SK-N-SH (cell line): ENCODE measurements at regions of chr3 and their contacts with region 1.

Region 1: GRCh38 chr3:45210308-45211041 is 15.6 kb downstream of the TMEM158 start:
- DNase-seq: peak; percentile 75
- H3K4me3 ChIP-seq: no peak overlapping the region; a peak in 1 of 4 replicates
- H3K27ac ChIP-seq: no peak overlapping the region
- H3K4me1 ChIP-seq: peaks cover 0 to 9% of the 10 kb centered on the region in 2 experiments; a peak in 1 of 4 replicates
- H3K27me3 ChIP-seq: no peaks in the 10 kb centered on the region
- CTCF ChIP-seq: peak; percentile 89
- EP300 ChIP-seq: no peak; a peak in 1 of 4 replicates
- RAD21 ChIP-seq: peak; percentile 81

Region 2: GRCh38 chr3:45055411-45056143 is 154.9 kb before region 1 on chr3:
- CTCF ChIA-PET with region 1: interaction called, 21 read pairs
- POLR2A ChIA-PET with region 1: no interaction called
- DNase-seq: peak; percentile 59
- H3K4me3 ChIP-seq: no peak overlapping the region
- H3K27ac ChIP-seq: peak overlapping the region in 1 of 2 experiments; percentile 67; a peak in 2 of 4 replicates
- H3K4me1 ChIP-seq: peaks cover 0 to 17% of the 10 kb centered on the region in 2 experiments; a peak in 2 of 4 replicates
- H3K27me3 ChIP-seq: no peaks in the 10 kb centered on the region
- CTCF ChIP-seq: peak; percentile 53
- EP300 ChIP-seq: no peak
- RAD21 ChIP-seq: peak; percentile 55

Region 3: GRCh38 chr3:45182915-45183867 is 27.3 kb before region 1 on chr3:
- CTCF ChIA-PET with region 1: interaction called, 11 read pairs
- POLR2A ChIA-PET with region 1: no interaction called
- DNase-seq: no peak
- H3K4me3 ChIP-seq: no peak overlapping the region
- H3K27ac ChIP-seq: peak overlapping the region in 1 of 2 experiments; percentile 19; a peak in 1 of 4 replicates
- H3K4me1 ChIP-seq: peaks cover 7 to 12% of the 10 kb centered on the region in 2 experiments; a peak in 2 of 4 replicates
- H3K27me3 ChIP-seq: no peaks in the 10 kb centered on the region
- CTCF ChIP-seq: no peak
- EP300 ChIP-seq: no peak
- RAD21 ChIP-seq: no peak

Region 4: DNA sequence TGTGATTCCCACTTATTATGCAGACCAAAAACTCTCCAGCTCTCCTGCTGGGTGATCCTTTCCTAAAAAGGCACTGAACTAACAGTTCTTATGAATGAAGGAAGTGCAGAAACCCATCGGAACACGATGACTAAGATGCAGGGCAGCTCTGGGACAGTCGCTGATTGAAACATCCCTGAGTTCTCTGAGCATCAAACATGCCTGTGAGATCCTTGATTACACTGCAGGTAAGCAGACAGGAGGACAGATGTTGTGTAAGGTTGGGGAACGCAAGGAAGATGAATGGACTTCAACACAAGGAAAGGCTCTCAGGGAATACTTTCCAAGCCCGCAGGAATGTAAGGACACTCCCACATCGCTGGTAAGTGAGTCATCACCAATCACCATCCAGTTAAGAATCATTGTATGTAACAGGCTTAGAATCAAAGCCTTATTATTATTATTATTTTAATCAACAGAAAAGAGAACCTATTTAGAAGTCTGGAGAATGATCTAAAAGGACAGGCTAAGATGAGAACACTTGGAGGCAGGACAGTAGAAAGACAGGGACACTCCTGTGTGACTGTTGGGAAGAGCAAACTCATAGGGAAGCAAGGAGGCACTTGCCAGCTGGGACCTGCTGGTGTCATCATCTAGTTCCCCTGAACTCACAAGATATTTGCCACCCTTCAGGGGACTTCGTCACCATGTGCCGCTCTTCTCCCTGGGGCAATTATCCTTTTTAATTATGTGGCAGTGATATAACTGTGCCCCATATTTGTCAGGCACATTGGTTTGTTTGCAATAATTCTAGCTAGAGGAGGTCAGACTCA is 10.4 kb before region 1 on chr3:
- CTCF ChIA-PET with region 1: interaction called, 19 read pairs
- POLR2A ChIA-PET with region 1: no interaction called
- DNase-seq: no peak
- H3K4me3 ChIP-seq: 0 out of 4 replicates have a peak overlapping the region, but pooled peaks of 1 of the 2 experiments have one; percentile 29
- H3K27ac ChIP-seq: peak overlapping the region; percentile 3 to 81; a peak in 3 of 4 replicates
- H3K4me1 ChIP-seq: peaks cover 0 to 20% of the 10 kb centered on the region in 2 experiments; a peak in 3 of 4 replicates
- H3K27me3 ChIP-seq: no peaks in the 10 kb centered on the region
- CTCF ChIP-seq: no peak
- EP300 ChIP-seq: peak in 1 of 2 experiments; percentile 28; a peak in 1 of 4 replicates
- RAD21 ChIP-seq: no peak

Region 5: GRCh38 chr3:45244356-45244755 is 33.9 kb after region 1 on chr3:
- CTCF ChIA-PET with region 1: no interaction called
- POLR2A ChIA-PET with region 1: no interaction called
- DNase-seq: no peak
- H3K4me3 ChIP-seq: no peak overlapping the region
- H3K27ac ChIP-seq: no peak overlapping the region
- H3K4me1 ChIP-seq: no peaks in the 10 kb centered on the region; a peak in 1 of 4 replicates
- H3K27me3 ChIP-seq: no peaks in the 10 kb centered on the region
- CTCF ChIP-seq: no peak
- EP300 ChIP-seq: no peak
- RAD21 ChIP-seq: no peak

Region 6: DNA sequence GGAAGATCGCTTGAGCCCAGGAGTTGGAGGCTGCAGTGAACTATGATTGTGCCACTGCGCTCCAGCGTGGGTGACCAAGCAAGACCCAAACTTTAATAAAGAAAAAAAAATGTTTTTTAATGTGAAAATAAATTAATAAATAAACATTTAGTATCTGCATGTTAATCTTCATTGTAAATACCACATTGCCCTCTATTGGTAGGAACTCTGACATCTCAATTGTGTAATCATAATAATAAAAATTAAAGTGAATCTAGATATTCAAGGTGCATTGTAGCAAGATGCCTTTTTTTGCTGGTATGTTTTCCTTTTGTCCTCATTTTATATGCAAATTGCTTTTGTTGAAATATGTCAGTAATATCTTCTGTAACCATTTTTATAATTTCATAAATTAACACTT is 289.1 kb after region 1 on chr3:
- CTCF ChIA-PET with region 1: interaction called, 18 read pairs
- POLR2A ChIA-PET with region 1: no interaction called
- DNase-seq: peak; percentile 51
- H3K4me3 ChIP-seq: no peak overlapping the region
- H3K27ac ChIP-seq: no peak overlapping the region
- H3K4me1 ChIP-seq: no peaks in the 10 kb centered on the region
- H3K27me3 ChIP-seq: no peaks in the 10 kb centered on the region
- CTCF ChIP-seq: peak; percentile 68
- EP300 ChIP-seq: no peak
- RAD21 ChIP-seq: peak; percentile 71